CD4-positive, alpha-beta memory T cell (primary cell): ENCODE measurements at regions of chr12 and their contacts with region 1.

Region 1: GRCh38 chr12:47812797-47813510 is 6.7 kb downstream of the HDAC7 start:
- DNase-seq: peak; percentile 79 to 97 (median 85)
- H3K4me3 ChIP-seq: peak overlapping the region; percentile 57 to 80
- H3K4me3 Mint-ChIP-seq: peak overlapping the region; percentile 82 to 92 (median 86)
- H3K27ac ChIP-seq: peak overlapping the region; percentile 91
- H3K27ac Mint-ChIP-seq: peak overlapping the region; percentile 93 to 99 (median 97)
- H3K4me1 ChIP-seq: peaks cover 97% of the 10 kb centered on the region
- H3K4me1 Mint-ChIP-seq: peaks cover 73 to 100% (median 88%) of the 10 kb centered on the region in 4 donors
- H3K27me3 ChIP-seq: no peaks in the 10 kb centered on the region
- H3K27me3 Mint-ChIP-seq: no peaks in the 10 kb centered on the region

Region 2: GRCh38 chr12:47705566-47706425 is 107.2 kb before region 1 on chr12 and contains the start of gene RPAP3:
- CTCF ChIA-PET with region 1: interaction called, 4 read pairs
- POLR2A ChIA-PET with region 1: interaction called, 10 read pairs
- intact Hi-C with region 1: no loop called
- DNase-seq: peak; percentile 93 to 96 (median 93)
- H3K4me3 ChIP-seq: peak within 1 kb of the TSS; percentile 60 to 70
- H3K4me3 Mint-ChIP-seq: peak within 1 kb of the TSS; percentile 95 to 100 (median 98)
- H3K27ac ChIP-seq: peak within 1 kb of the TSS; percentile 81
- H3K27ac Mint-ChIP-seq: peak within 1 kb of the TSS; percentile 93 to 99 (median 97)
- H3K4me1 ChIP-seq: peaks cover 54% of the 10 kb centered on the region
- H3K4me1 Mint-ChIP-seq: peaks cover 35 to 56% (median 47%) of the 10 kb centered on the region in 4 donors
- H3K27me3 ChIP-seq: no peaks in the 10 kb centered on the region
- H3K27me3 Mint-ChIP-seq: no peaks in the 10 kb centered on the region
- total RNA-seq, gene RPAP3: 40.8 to 41.8 TPM

Region 3: DNA sequence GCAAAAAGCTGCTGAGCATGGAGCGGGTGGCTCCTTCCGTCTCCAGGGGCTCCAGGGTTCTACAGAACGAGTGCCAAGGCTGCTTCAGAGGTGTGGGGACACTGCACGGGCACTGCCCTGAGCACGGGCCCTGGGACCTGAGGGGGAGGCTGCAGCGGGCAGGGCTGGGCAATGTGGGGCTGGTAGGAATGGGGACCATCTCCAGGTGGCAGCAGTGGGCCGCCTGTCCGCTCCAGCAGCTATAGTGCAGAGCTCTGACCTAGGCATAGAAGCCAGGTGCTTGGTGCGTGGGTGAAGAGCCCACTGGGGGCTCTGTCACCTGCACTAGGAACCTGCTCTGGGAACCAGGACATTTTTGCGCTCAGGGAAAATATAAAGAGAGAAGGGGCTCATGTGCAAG is 15.5 kb before region 1 on chr12:
- CTCF ChIA-PET with region 1: interaction called, 17 read pairs
- POLR2A ChIA-PET with region 1: interaction called, 73 read pairs
- intact Hi-C with region 1: no loop called
- DNase-seq: peak in 2 of 5 donors; percentile 20 to 21
- H3K4me3 ChIP-seq: no peak overlapping the region
- H3K4me3 Mint-ChIP-seq: no peak overlapping the region
- H3K27ac ChIP-seq: no peak overlapping the region
- H3K27ac Mint-ChIP-seq: peak overlapping the region in 3 of 7 donors; percentile 56 to 80 (median 73)
- H3K4me1 ChIP-seq: peaks cover 26% of the 10 kb centered on the region
- H3K4me1 Mint-ChIP-seq: peaks cover 15 to 32% (median 23%) of the 10 kb centered on the region in 4 donors
- H3K27me3 ChIP-seq: no peaks in the 10 kb centered on the region
- H3K27me3 Mint-ChIP-seq: no peaks in the 10 kb centered on the region

Region 4: GRCh38 chr12:47828608-47829536 is 15.9 kb after region 1 on chr12:
- CTCF ChIA-PET with region 1: interaction called, 568 read pairs
- POLR2A ChIA-PET with region 1: interaction called, 516 read pairs
- intact Hi-C with region 1: loop called (anchors 1 kb)
- DNase-seq: no peak
- H3K4me3 ChIP-seq: no peak overlapping the region
- H3K4me3 Mint-ChIP-seq: peak overlapping the region in 4 of 8 donors; percentile 20 to 62 (median 48)
- H3K27ac ChIP-seq: peak overlapping the region; percentile 26
- H3K27ac Mint-ChIP-seq: peak overlapping the region; percentile 72 to 92 (median 83)
- H3K4me1 ChIP-seq: peaks cover 97% of the 10 kb centered on the region
- H3K4me1 Mint-ChIP-seq: peaks cover 49 to 93% (median 78%) of the 10 kb centered on the region in 4 donors
- H3K27me3 ChIP-seq: no peaks in the 10 kb centered on the region
- H3K27me3 Mint-ChIP-seq: no peaks in the 10 kb centered on the region

Region 5: DNA sequence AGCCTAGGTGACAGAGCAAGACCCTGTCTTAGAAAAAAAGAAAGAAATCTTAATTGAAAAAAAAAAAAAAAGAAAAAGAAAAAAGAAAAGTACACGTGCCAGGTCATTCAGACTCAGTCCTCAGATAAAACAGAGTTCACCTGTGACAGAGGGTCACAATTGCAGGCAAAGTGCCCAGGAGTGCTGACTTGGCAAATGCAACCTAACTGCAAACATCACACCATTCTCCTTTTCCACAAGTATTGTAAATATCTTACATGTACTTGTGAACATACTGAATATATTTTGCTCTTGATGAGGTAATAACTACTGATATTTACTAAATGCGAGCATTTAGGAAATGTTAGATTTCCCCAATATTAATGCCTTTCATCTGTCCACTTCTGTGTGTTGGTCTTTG is 200.3 kb after region 1 on chr12:
- CTCF ChIA-PET with region 1: no interaction called
- POLR2A ChIA-PET with region 1: no interaction called
- intact Hi-C with region 1: no loop called
- DNase-seq: no peak
- H3K4me3 ChIP-seq: no peak overlapping the region
- H3K4me3 Mint-ChIP-seq: no peak overlapping the region
- H3K27ac ChIP-seq: no peak overlapping the region
- H3K27ac Mint-ChIP-seq: no peak overlapping the region
- H3K4me1 ChIP-seq: no peaks in the 10 kb centered on the region
- H3K4me1 Mint-ChIP-seq: no peaks in the 10 kb centered on the region
- H3K27me3 ChIP-seq: peaks cover 8% of the 10 kb centered on the region
- H3K27me3 Mint-ChIP-seq: peaks cover 22 to 39% of the 10 kb centered on the region in 2 donors